BJ (cell line): ENCODE measurements at regions of chr7 and their contacts with region 1.

Region 1: DNA sequence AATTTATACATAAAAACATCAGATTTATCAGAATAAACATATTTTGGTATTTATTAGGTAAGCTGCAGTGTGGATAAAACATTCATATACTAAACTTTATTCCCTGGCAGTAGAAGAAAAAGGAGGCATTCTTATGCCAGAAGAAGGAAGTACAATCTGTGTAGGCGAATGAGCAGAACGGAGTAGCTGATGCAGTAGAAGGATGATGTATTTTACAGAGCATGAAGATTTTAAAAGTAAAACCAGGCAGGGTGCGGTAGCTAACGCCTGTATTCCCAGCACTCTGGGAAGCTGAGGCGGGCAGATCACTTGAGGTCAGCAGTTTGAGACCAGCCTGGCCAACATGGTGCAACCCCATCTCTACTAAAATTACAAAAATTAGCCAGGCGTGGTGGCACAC is 294.9 kb upstream of the MKLN1 start:
- DNase-seq: no peak
- H3K4me3 ChIP-seq: no peak overlapping the region
- H3K27me3 ChIP-seq: no peaks in the 10 kb centered on the region
- CTCF ChIP-seq: no peak

Region 2: DNA sequence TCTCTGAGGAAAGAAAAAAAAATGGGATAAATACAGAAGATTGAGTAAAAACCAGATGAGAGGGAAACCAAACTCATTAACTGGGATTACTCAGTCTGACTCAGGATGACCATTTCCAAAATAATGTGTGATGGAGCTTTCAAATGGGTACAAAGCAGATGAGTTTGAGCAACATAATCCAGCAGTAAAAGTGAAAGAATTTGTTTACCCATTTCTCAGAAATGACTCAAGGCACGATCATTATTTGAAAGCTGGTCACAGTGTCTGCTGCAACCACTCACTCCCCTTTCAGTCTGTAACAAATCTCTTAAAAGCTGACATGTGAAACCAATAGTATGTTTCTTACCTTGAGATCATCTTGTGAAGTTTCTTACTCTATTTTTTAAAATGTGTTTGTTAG is 194.0 kb before region 1 on chr7:
- CTCF ChIA-PET with region 1: no interaction called
- POLR2A ChIA-PET with region 1: interaction called, 11 read pairs
- DNase-seq: peak; percentile 99
- H3K4me3 ChIP-seq: no peak overlapping the region
- H3K27me3 ChIP-seq: no peaks in the 10 kb centered on the region
- CTCF ChIP-seq: no peak